ENCODE measurements at regions of chr16 and their contacts with region 1.

Region 1: GRCh38 chr16:1782352-1783091 is at the starts of genes NUBP2 and SPSB3:
- DNase-seq: peak; percentile 99
- H3K4me3 Mint-ChIP-seq: peak within 1 kb of the TSS; percentile 93
- H3K27ac Mint-ChIP-seq: peak within 1 kb of the TSS; percentile 81
- H3K4me1 Mint-ChIP-seq: no peaks in the 10 kb centered on the region
- H3K27me3 Mint-ChIP-seq: no peaks in the 10 kb centered on the region
- total RNA-seq, gene NUBP2: 81.6 and 82.8 TPM in 2 replicates
- total RNA-seq, gene SPSB3: 30.3 and 30.8 TPM in 2 replicates

Region 2: GRCh38 chr16:1705688-1706385 is 76.7 kb before region 1 on chr16 and contains the start of gene MAPK8IP3:
- intact Hi-C with region 1: loop called (anchors 1 kb)
- DNase-seq: peak; percentile 96
- H3K4me3 Mint-ChIP-seq: peak within 1 kb of the TSS; percentile 94
- H3K27ac Mint-ChIP-seq: peak within 1 kb of the TSS; percentile 96
- H3K4me1 Mint-ChIP-seq: peaks cover 28% of the 10 kb centered on the region
- H3K27me3 Mint-ChIP-seq: no peaks in the 10 kb centered on the region
- total RNA-seq, gene MAPK8IP3: 84.4 and 84.6 TPM in 2 replicates

Region 3: GRCh38 chr16:1763521-1764511 is 18.7 kb before region 1 on chr16:
- intact Hi-C with region 1: no loop called
- DNase-seq: no peak
- H3K4me3 Mint-ChIP-seq: no peak overlapping the region
- H3K27ac Mint-ChIP-seq: no peak overlapping the region
- H3K4me1 Mint-ChIP-seq: no peaks in the 10 kb centered on the region
- H3K27me3 Mint-ChIP-seq: no peaks in the 10 kb centered on the region

Region 4: GRCh38 chr16:1794221-1794860 is 11.8 kb after region 1 on chr16:
- intact Hi-C with region 1: no loop called
- DNase-seq: no peak
- H3K4me3 Mint-ChIP-seq: no peak overlapping the region
- H3K27ac Mint-ChIP-seq: no peak overlapping the region
- H3K4me1 Mint-ChIP-seq: no peaks in the 10 kb centered on the region
- H3K27me3 Mint-ChIP-seq: no peaks in the 10 kb centered on the region

Region 5: GRCh38 chr16:1863681-1864460 is 81.3 kb after region 1 on chr16:
- intact Hi-C with region 1: loop called (anchors 2 kb)
- DNase-seq: no peak
- H3K4me3 Mint-ChIP-seq: no peak overlapping the region
- H3K27ac Mint-ChIP-seq: no peak overlapping the region
- H3K4me1 Mint-ChIP-seq: no peaks in the 10 kb centered on the region
- H3K27me3 Mint-ChIP-seq: peaks cover 37% of the 10 kb centered on the region

Region 6: DNA sequence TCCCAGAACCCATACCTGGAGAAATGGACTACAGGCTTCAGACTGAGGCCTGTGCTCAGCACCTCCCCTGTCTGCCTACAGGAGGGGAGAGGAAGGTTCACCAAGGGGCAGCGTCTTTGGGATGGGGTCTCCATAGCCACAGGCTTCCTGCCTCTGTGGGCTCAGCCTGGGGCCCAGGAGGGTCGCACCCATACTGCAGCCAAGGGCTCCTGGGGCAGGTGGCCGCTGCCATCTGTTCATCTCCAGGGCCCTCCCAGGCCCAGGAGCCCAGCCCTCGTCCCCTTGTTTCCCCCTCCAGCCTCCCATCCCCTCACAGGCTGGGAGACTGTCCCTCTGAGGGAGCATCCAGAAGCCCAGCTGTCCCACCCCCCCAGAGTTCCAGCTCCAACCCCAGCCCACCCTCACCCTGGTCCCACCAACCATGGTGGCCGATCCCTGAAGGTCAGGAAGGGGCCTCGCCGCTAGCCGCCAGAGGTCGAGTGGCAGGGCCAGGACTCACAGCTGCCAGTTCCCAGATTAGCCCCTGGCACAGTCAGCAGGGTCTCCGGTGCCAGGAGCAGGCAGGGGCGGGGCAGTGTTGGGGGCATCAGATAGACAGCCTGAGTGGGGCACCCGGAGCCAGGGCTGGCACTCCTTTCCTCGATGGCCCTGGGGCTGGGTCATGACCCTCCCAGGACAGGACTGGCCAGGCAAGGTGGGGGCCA is 171.8 kb after region 1 on chr16 and contains the start of gene RPL3L:
- intact Hi-C with region 1: no loop called
- DNase-seq: no peak
- H3K4me3 Mint-ChIP-seq: no peak within 1 kb of the TSS
- H3K27ac Mint-ChIP-seq: no peak within 1 kb of the TSS
- H3K4me1 Mint-ChIP-seq: peaks cover 6% of the 10 kb centered on the region
- H3K27me3 Mint-ChIP-seq: peaks cover 2% of the 10 kb centered on the region
- total RNA-seq, gene RPL3L: 1.1 and 1.9 TPM in 2 replicates

Region 7: GRCh38 chr16:1964506-1965395 is 182.2 kb after region 1 on chr16 and contains the start of gene RPS2:
- intact Hi-C with region 1: loop called (anchors 2 kb)
- DNase-seq: peak; percentile 99
- H3K4me3 Mint-ChIP-seq: peak within 1 kb of the TSS; percentile 100
- H3K27ac Mint-ChIP-seq: peak within 1 kb of the TSS; percentile 97
- H3K4me1 Mint-ChIP-seq: peaks cover 34% of the 10 kb centered on the region
- H3K27me3 Mint-ChIP-seq: no peaks in the 10 kb centered on the region
- total RNA-seq, gene RPS2: 3,144 and 3,145 TPM in 2 replicates

Region 8: GRCh38 chr16:2531767-2532493 is 749.4 kb after region 1 on chr16:
- intact Hi-C with region 1: loop called (anchors 10 kb)
- DNase-seq: peak; percentile 97
- H3K4me3 Mint-ChIP-seq: peak overlapping the region; percentile 100
- H3K27ac Mint-ChIP-seq: peak overlapping the region; percentile 100
- H3K4me1 Mint-ChIP-seq: peaks cover 9% of the 10 kb centered on the region
- H3K27me3 Mint-ChIP-seq: no peaks in the 10 kb centered on the region